ENCODE measurements at regions of chr13 and their contacts with region 1.

Region 1: GRCh38 chr13:40149611-40150274 is 494.3 kb downstream of the COG6 start:
- DNase-seq: no peak
- H3K4me3 Mint-ChIP-seq: no peak overlapping the region
- H3K27ac Mint-ChIP-seq: peak overlapping the region; percentile 18
- H3K4me1 Mint-ChIP-seq: peaks cover 62% of the 10 kb centered on the region
- H3K27me3 Mint-ChIP-seq: no peaks in the 10 kb centered on the region

Region 2: GRCh38 chr13:40069173-40070044 is 80.3 kb before region 1 on chr13:
- CTCF ChIA-PET with region 1: interaction called, 11 read pairs
- POLR2A ChIA-PET with region 1: no interaction called
- intact Hi-C with region 1: loop called (anchors 1 kb)
- DNase-seq: peak; percentile 83
- H3K4me3 Mint-ChIP-seq: no peak overlapping the region
- H3K27ac Mint-ChIP-seq: no peak overlapping the region
- H3K4me1 Mint-ChIP-seq: peaks cover 24% of the 10 kb centered on the region
- H3K27me3 Mint-ChIP-seq: no peaks in the 10 kb centered on the region

Region 3: GRCh38 chr13:40109356-40109844 is 40.3 kb before region 1 on chr13:
- CTCF ChIA-PET with region 1: no interaction called
- POLR2A ChIA-PET with region 1: interaction called, 4 read pairs
- intact Hi-C with region 1: loop called (anchors 1 kb)
- DNase-seq: peak; percentile 51
- H3K4me3 Mint-ChIP-seq: no peak overlapping the region
- H3K27ac Mint-ChIP-seq: peak overlapping the region; percentile 18
- H3K4me1 Mint-ChIP-seq: peaks cover 33% of the 10 kb centered on the region
- H3K27me3 Mint-ChIP-seq: no peaks in the 10 kb centered on the region

Region 4: DNA sequence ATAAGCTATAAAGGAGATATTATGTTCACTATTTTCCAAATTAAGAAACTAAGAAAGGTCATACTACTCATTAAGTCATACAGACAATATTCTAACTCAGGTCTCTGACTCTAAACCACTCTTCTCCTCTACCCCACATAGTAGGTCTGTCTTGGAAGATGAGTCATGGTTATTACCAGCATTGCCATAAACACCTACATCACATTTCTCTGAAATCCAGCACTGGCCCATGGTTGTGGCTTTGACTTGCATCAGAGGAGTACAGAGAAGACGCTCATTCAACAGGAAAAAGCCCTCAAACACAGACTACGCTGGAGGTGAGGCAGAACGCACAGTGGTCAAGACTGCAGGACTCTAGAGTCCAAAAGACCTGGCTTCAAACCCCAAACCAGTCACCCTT is 17.5 kb before region 1 on chr13:
- CTCF ChIA-PET with region 1: interaction called, 5 read pairs
- POLR2A ChIA-PET with region 1: interaction called, 3 read pairs
- intact Hi-C with region 1: loop called (anchors 1 kb)
- DNase-seq: peak; percentile 80
- H3K4me3 Mint-ChIP-seq: no peak overlapping the region
- H3K27ac Mint-ChIP-seq: peak overlapping the region; percentile 77
- H3K4me1 Mint-ChIP-seq: peaks cover 42% of the 10 kb centered on the region
- H3K27me3 Mint-ChIP-seq: no peaks in the 10 kb centered on the region

Region 5: DNA sequence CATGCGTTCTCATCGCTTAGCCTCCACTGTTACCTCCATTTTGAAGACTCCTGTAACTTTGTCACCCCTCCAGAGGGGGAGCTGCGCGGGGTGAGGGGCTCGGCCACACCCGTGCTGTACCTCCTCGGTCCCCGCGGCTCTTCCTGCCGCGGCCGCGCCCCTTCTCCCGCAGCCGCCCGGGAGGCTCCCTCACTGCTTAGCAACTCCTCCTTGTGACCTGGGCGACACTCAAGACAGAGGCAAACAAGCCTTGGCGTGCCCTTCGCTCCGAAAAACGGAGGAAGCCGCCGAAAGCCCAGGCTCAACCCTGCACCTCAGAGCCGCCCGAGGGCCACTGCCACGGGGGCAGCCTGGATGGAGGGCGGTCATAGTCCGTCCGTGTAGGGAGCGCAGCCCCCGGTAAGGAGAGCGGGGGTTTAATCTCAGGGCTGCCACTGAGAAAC is 22.4 kb after region 1 on chr13:
- CTCF ChIA-PET with region 1: no interaction called
- POLR2A ChIA-PET with region 1: no interaction called
- intact Hi-C with region 1: loop called (anchors 2 kb)
- DNase-seq: no peak
- H3K4me3 Mint-ChIP-seq: no peak overlapping the region
- H3K27ac Mint-ChIP-seq: no peak overlapping the region
- H3K4me1 Mint-ChIP-seq: peaks cover 23% of the 10 kb centered on the region
- H3K27me3 Mint-ChIP-seq: no peaks in the 10 kb centered on the region

Region 6: GRCh38 chr13:40190641-40191100 is 40.9 kb after region 1 on chr13:
- CTCF ChIA-PET with region 1: interaction called, 3 read pairs
- POLR2A ChIA-PET with region 1: no interaction called
- intact Hi-C with region 1: loop called (anchors 1 kb)
- DNase-seq: peak; percentile 79
- H3K4me3 Mint-ChIP-seq: peak overlapping the region; percentile 9
- H3K27ac Mint-ChIP-seq: peak overlapping the region; percentile 85
- H3K4me1 Mint-ChIP-seq: peaks cover 66% of the 10 kb centered on the region
- H3K27me3 Mint-ChIP-seq: no peaks in the 10 kb centered on the region

Region 7: GRCh38 chr13:40206241-40207000 is 56.7 kb after region 1 on chr13:
- CTCF ChIA-PET with region 1: no interaction called
- POLR2A ChIA-PET with region 1: interaction called, 4 read pairs
- intact Hi-C with region 1: loop called (anchors 2 kb)
- DNase-seq: peak; percentile 68
- H3K4me3 Mint-ChIP-seq: peak overlapping the region; percentile 60
- H3K27ac Mint-ChIP-seq: peak overlapping the region; percentile 99
- H3K4me1 Mint-ChIP-seq: peaks cover 52% of the 10 kb centered on the region
- H3K27me3 Mint-ChIP-seq: no peaks in the 10 kb centered on the region

Measured in activated CD4-positive, alpha-beta memory T cell treated with anti-CD3 and anti-CD28 coated beads for 36 hours (primary cell).